BJ (cell line): ENCODE measurements at regions of chrX and their contacts with region 1.

Region 1: GRCh38 chrX:22081475-22082092 is 49.5 kb downstream of the PHEX start:
- DNase-seq: no peak
- H3K4me3 ChIP-seq: no peak overlapping the region
- H3K27me3 ChIP-seq: no peaks in the 10 kb centered on the region
- CTCF ChIP-seq: peak; percentile 74

Region 2: GRCh38 chrX:22069586-22069985 is 12.0 kb before region 1 on chrX:
- CTCF ChIA-PET with region 1: interaction called, 25 read pairs
- POLR2A ChIA-PET with region 1: no interaction called
- DNase-seq: no peak
- H3K4me3 ChIP-seq: no peak overlapping the region
- H3K27me3 ChIP-seq: no peaks in the 10 kb centered on the region
- CTCF ChIP-seq: no peak

Region 3: GRCh38 chrX:22206781-22207180 is 125.2 kb after region 1 on chrX:
- CTCF ChIA-PET with region 1: no interaction called
- POLR2A ChIA-PET with region 1: no interaction called
- DNase-seq: no peak
- H3K4me3 ChIP-seq: no peak overlapping the region
- H3K27me3 ChIP-seq: no peaks in the 10 kb centered on the region
- CTCF ChIP-seq: no peak